ENCODE measurements at regions of chr10 and their contacts with region 1.

Region 1: DNA sequence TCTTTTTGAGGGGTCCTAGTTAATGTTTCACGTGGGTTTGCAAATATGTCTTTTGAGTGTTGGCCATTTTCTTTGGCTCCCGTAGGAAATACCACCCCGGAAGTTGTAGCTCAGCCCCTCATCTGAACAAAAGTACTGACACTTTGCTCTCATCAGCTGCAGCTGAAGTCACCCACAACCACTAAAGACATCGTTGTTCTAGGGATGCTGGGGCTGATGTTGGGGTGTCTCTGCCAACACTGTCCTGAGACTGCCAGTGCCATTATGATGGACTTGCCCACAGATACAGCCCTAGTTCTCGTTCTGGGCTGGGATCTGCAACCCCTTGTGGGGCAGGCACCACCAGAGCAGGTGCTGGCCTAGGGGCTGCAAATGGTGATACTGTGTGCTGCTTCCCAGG is 82.6 kb upstream of the ARHGAP21 start:
- DNase-seq: no peak
- H3K4me3 ChIP-seq: no peak overlapping the region
- H3K4me3 Mint-ChIP-seq: no peak overlapping the region
- H3K27ac ChIP-seq: no peak overlapping the region
- H3K27ac Mint-ChIP-seq: no peak overlapping the region
- H3K4me1 ChIP-seq: no peaks in the 10 kb centered on the region
- H3K4me1 Mint-ChIP-seq: no peaks in the 10 kb centered on the region
- H3K27me3 ChIP-seq: no peaks in the 10 kb centered on the region
- H3K27me3 Mint-ChIP-seq: peaks cover 0 to 3% of the 10 kb centered on the region in 2 donors

Region 2: DNA sequence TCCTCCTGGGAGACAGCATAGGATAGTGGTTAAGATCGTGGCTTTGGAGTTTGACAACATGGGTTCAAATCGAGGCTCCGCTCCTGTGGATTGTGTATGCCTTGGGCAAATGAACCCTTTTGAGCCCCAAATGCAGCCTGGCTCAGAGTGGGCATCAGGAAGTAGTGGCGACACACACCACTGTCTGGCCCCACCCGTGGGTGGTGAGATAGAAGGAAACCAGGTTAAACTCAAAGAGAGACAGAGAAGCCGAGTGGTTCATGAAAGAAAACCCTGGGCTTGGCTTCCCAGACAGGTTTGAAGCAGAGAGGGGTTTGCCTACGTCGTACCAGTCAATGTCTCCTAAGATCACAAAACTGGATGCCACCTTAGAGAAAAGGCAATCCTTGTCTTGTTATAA is 88.5 kb after region 1 on chr10:
- CTCF ChIA-PET with region 1: no interaction called
- POLR2A ChIA-PET with region 1: interaction called, 10 read pairs
- DNase-seq: peak; percentile 4 to 64 (median 43)
- H3K4me3 ChIP-seq: peak overlapping the region; percentile 56
- H3K4me3 Mint-ChIP-seq: peak overlapping the region; percentile 55 to 93 (median 86)
- H3K27ac ChIP-seq: peak overlapping the region; percentile 54
- H3K27ac Mint-ChIP-seq: peak overlapping the region; percentile 91 to 99 (median 96)
- H3K4me1 ChIP-seq: peaks cover 43% of the 10 kb centered on the region
- H3K4me1 Mint-ChIP-seq: peaks cover 56 to 96% (median 79%) of the 10 kb centered on the region in 3 donors
- H3K27me3 ChIP-seq: no peaks in the 10 kb centered on the region
- H3K27me3 Mint-ChIP-seq: no peaks in the 10 kb centered on the region

Measured in CD8-positive, alpha-beta memory T cell (primary cell).